PC-3 (cell line): ENCODE measurements at regions of chr11 and their contacts with region 1.

Region 1: DNA sequence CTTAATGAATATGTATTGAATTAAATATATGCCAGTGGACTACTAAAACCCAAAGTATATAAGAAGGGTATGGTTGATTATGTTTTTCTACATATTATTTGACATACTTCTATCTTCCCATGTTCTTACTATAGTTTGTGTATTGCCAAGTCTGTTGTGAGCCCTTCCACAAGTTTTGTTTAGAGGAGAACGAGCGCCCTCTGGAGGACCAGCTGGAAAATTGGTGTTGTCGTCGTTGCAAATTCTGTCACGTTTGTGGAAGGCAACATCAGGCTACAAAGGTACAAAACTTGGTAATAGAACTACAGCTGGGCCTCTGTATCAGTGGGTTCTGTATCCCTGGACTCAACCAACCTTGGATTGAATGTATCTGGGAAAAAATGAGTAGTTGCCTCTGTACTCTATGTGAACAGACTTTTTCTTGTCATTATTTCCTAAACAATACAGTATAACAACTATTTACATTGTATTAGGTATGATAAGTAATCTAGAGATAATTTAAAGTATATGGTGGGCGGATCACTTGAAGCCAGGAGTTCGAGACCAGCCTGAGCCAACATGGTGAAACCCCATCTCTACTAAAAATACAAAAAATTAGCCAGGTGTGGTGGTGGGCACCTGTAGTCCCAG is 38.7 kb upstream of the TTC36 start:
- DNase-seq: peak; percentile 80
- ATAC-seq: peak; percentile 73
- H3K4me3 ChIP-seq: no peak overlapping the region
- H3K27ac ChIP-seq: no peak overlapping the region
- H3K4me1 ChIP-seq: no peaks in the 10 kb centered on the region
- H3K27me3 ChIP-seq: no peaks in the 10 kb centered on the region
- CTCF ChIP-seq: peak; percentile 97

Region 2: GRCh38 chr11:118295834-118296454 is 192.7 kb before region 1 on chr11:
- CTCF ChIA-PET with region 1: no interaction called
- POLR2A ChIA-PET with region 1: no interaction called
- intact Hi-C with region 1: loop called (anchors 5 kb)
- DNase-seq: peak; percentile 89
- ATAC-seq: peak; percentile 68
- H3K4me3 ChIP-seq: no peak overlapping the region
- H3K27ac ChIP-seq: no peak overlapping the region
- H3K4me1 ChIP-seq: peaks cover 17% of the 10 kb centered on the region
- H3K27me3 ChIP-seq: peaks cover 6% of the 10 kb centered on the region
- CTCF ChIP-seq: peak; percentile 95

Region 3: GRCh38 chr11:118401151-118401878 is 87.3 kb before region 1 on chr11 and contains the start of gene ATP5MG:
- CTCF ChIA-PET with region 1: no interaction called
- POLR2A ChIA-PET with region 1: no interaction called
- intact Hi-C with region 1: loop called (anchors 1 kb)
- DNase-seq: peak; percentile 95
- ATAC-seq: peak; percentile 79
- H3K4me3 ChIP-seq: peak within 1 kb of the TSS; percentile 90
- H3K27ac ChIP-seq: peak within 1 kb of the TSS; percentile 77
- H3K4me1 ChIP-seq: peaks cover 14% of the 10 kb centered on the region; the same call in 1 of the 2 replicates
- H3K27me3 ChIP-seq: no peaks in the 10 kb centered on the region
- CTCF ChIP-seq: 0 out of 2 replicates have a peak, but pooled peaks have one; percentile 19
- total RNA-seq, gene ATP5MG: 256 and 375 TPM in 2 replicates

Region 4: DNA sequence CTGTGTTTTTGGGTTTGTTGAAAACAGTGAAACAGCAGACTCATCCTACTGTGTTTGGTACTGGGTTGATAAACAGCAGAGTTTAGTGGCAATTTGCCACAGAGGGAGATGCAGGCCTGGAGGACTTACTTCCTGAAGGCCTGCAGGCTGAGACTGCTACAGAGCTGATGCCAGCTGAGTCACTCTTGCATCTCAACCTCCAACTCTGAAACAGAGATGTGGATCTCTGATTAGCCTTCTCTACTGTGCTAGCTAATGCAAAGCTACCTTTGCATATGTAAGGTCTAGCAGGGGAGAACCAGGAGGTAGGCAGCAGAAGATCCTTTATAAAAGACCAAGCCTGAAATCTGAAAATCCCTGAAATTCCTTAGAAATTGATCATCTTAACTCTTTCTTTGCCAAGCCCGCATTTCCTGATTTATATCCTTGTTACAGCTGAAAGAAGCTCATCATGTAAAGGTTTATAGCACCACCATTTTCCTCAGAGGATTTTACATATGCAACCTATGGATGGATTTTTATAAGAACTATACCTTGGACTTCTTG is 72.8 kb before region 1 on chr11:
- CTCF ChIA-PET with region 1: no interaction called
- POLR2A ChIA-PET with region 1: no interaction called
- intact Hi-C with region 1: loop called (anchors 5 kb)
- DNase-seq: peak; percentile 97
- ATAC-seq: peak; percentile 93
- H3K4me3 ChIP-seq: no peak overlapping the region
- H3K27ac ChIP-seq: no peak overlapping the region
- H3K4me1 ChIP-seq: peaks cover 24% of the 10 kb centered on the region
- H3K27me3 ChIP-seq: no peaks in the 10 kb centered on the region
- CTCF ChIP-seq: no peak

Region 5: GRCh38 chr11:118443590-118444218 is 44.9 kb before region 1 on chr11:
- CTCF ChIA-PET with region 1: no interaction called
- POLR2A ChIA-PET with region 1: no interaction called
- intact Hi-C with region 1: no loop called
- DNase-seq: no peak
- ATAC-seq: no peak
- H3K4me3 ChIP-seq: no peak overlapping the region
- H3K27ac ChIP-seq: no peak overlapping the region
- H3K4me1 ChIP-seq: peaks cover 25% of the 10 kb centered on the region
- H3K27me3 ChIP-seq: no peaks in the 10 kb centered on the region
- CTCF ChIP-seq: no peak

Region 6: DNA sequence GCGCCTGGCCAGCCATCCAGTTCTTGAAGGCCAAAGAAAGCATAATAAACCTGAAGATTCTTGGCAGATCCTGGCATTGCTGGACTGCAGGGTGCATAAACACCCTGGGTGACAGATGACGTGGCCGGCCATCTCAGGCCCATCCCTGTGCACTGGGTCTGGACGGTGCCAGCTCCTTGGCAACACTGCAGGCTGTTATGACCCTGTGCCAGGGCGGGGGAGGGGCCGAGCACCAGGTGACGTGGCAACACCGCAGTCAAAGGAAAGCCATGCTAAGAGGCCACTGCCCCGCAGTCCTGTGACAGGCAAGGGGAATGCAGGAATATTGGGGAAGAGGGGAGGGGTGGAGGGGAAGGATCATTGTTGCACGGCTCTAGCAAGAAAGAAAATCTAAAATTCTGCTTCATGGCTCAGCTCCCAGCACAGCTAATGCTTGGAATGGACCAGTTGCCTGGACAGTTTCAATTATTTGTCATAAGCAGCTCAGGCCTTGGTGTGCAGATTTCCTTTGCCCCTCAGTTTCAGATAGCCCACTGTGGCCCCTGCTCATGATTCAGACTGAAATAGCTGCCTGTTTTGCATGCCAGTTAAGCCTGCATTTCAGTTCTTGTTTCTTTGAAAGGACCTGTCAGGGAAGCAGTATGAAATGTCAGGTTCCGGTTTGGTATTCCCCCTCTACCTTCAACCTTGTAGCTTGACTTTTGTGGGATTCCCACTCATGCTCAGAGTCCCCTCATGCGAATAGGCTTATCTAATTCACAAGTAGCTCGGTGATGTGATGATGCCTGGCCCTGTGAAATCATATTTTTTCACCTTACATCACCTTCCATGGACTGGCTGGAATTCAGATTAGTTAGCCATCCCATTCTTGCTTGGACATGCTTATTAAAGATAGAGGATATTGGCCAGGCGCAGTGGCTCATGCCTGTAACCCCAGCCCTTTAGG is 332.1 kb after region 1 on chr11:
- CTCF ChIA-PET with region 1: no interaction called
- POLR2A ChIA-PET with region 1: no interaction called
- intact Hi-C with region 1: no loop called
- DNase-seq: peak; percentile 89
- ATAC-seq: peak; percentile 100
- H3K4me3 ChIP-seq: no peak overlapping the region
- H3K27ac ChIP-seq: peak overlapping the region; percentile 26
- H3K4me1 ChIP-seq: peaks cover 11% of the 10 kb centered on the region
- H3K27me3 ChIP-seq: no peaks in the 10 kb centered on the region
- CTCF ChIP-seq: no peak